Motor neuron (in vitro differentiated cells): ENCODE measurements at regions of chr5 and their contacts with region 1.

Region 1: DNA sequence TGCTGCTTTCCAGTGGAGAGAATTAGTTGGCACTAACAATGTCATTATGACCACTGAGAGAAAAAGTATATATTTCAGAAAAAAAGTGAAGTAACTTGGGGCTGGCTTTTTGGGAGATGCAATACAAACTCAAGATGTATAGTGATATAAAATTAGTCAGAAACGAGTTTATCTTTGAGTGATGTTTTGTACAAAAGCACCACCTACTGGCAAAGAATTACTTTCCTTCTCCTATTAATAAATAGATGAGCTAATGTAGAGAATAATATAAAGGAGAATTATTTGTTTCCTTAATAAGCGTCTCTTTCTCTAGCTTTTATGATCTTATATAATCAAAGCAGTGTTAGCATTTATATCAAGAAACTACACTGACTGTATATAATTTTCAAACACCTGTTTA is 158.8 kb downstream of the MEF2C start:
- ATAC-seq: no peak
- H3K4me3 ChIP-seq: no peak overlapping the region
- H3K27ac ChIP-seq: no peak overlapping the region
- H3K4me1 ChIP-seq: peaks cover 4 to 6% of the 10 kb centered on the region in 2 donors

Region 2: GRCh38 chr5:87412630-87413342 is 1311.4 kb before region 1 on chr5 and contains the start of gene CCNH:
- in situ Hi-C with region 1: loop called in 1 of 9 experiments (anchors 25 kb)
- ATAC-seq: peak; percentile 92 to 98 (median 97)
- H3K4me3 ChIP-seq: peak within 1 kb of the TSS; percentile 60 to 90 (median 87)
- H3K27ac ChIP-seq: peak within 1 kb of the TSS; percentile 81 to 88
- H3K4me1 ChIP-seq: peaks cover 8 to 14% of the 10 kb centered on the region in 2 donors
- total RNA-seq, gene CCNH: 45.5 to 103 (median 74.3) TPM

Region 3: GRCh38 chr5:88518131-88519016 is 205.8 kb before region 1 on chr5:
- in situ Hi-C with region 1: no loop called
- ATAC-seq: no peak
- H3K4me3 ChIP-seq: no peak overlapping the region
- H3K27ac ChIP-seq: no peak overlapping the region
- H3K4me1 ChIP-seq: no peaks in the 10 kb centered on the region

Region 4: GRCh38 chr5:88845081-88845697 is 121.0 kb after region 1 on chr5:
- in situ Hi-C with region 1: no loop called
- ATAC-seq: no peak
- H3K4me3 ChIP-seq: no peak overlapping the region
- H3K27ac ChIP-seq: no peak overlapping the region
- H3K4me1 ChIP-seq: no peaks in the 10 kb centered on the region

Region 5: DNA sequence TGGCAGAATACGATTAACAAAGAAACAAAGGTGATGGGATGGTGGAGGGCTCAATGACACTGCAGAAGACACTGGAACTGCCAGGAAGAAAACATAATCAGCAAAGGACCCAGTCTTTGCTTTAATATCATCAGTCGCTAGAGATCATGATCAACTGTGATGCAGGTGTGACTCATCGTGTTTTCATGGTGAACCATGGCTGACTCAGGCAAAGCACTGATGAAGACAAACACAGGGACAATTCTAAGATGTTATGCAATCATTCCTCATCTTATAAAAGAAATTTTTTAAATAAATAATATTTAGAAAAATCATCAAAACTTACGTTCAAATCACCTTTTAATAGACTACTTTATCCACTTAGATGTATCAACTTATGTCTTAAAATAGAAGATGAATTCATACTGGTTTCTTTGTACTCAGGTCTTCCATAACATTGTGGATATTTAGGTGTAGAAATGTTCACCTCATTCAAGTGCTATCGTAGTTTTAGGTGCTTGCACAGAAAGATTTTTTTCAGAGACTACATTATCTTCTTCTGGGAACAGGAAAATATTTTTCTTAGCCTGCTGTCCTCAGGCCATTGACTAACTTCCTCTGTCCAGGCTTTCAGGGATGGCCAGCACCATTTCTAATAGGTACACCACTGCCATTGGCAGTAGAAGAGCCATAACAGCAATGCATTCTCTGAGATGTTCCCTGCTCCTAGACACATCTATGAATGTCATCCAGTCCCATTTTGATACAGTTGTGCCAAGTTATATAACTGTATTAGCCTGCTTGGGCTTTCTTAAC is 832.2 kb after region 1 on chr5:
- in situ Hi-C with region 1: no loop called
- ATAC-seq: peak in 6 of 8 experiments; percentile 33 to 86 (median 63)
- H3K4me3 ChIP-seq: no peak overlapping the region
- H3K27ac ChIP-seq: no peak overlapping the region
- H3K4me1 ChIP-seq: no peaks in the 10 kb centered on the region

Region 6: GRCh38 chr5:89830691-89831090 is 1106.5 kb after region 1 on chr5:
- in situ Hi-C with region 1: no loop called
- ATAC-seq: no peak
- H3K4me3 ChIP-seq: no peak overlapping the region
- H3K27ac ChIP-seq: no peak overlapping the region
- H3K4me1 ChIP-seq: no peaks in the 10 kb centered on the region

Region 7: DNA sequence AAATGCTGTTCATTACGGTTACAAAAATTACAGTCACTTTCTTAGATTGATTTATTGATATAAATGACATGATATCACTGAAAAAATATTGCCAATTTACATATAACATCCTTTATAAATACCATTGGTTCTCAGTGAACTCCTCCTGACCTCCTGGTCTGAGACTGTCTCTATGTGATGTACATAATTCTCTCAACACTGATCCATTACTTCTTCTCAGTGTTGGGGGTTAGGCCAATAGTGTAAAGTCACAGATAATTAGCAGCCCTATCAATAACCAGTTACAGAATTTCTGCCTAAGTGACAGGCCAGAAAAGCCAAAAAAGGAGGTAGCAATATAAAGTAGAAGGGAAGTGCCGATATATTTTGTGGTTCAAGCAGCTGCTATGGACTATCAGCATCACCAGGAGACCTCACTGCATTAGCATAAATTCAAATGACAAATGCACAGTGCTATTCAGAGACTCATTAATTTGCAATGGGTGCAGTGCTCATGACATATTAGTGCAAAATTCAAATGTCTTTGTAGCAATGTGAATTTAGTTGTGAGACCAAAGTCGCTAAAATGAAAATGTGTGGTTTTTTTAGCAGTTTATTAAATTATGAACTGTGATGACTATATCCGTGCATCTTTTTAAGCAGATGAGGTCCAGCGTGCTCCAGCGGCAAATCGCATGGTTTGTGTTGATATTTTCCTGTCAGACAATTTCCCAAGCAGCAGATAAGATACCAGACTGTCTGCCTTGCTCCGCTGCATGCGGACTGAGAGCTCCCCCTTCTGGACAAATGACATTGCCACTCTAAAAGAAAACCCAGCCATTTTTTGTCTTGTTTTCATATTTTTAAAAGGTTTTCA is 1540.7 kb after region 1 on chr5:
- in situ Hi-C with region 1: loop called in 3 of 9 experiments (anchors 25 kb)
- ATAC-seq: peak; percentile 94 to 97 (median 96)
- H3K4me3 ChIP-seq: peak overlapping the region in 1 of 5 donors; percentile 9
- H3K27ac ChIP-seq: no peak overlapping the region
- H3K4me1 ChIP-seq: peaks cover 15 to 19% of the 10 kb centered on the region in 2 donors